ENCODE measurements at regions of chr20 and their contacts with region 1.

Region 1: GRCh38 chr20:32674362-32674789 is 635 bp upstream of the C20orf203 start:
- DNase-seq: no peak
- ATAC-seq: peak in 3 of 8 donors; percentile 34 to 48 (median 44)
- H3K4me3 ChIP-seq: no peak overlapping the region
- H3K27ac ChIP-seq: no peak overlapping the region
- H3K4me1 ChIP-seq: peaks cover 0 to 31% (median 0%) of the 10 kb centered on the region in 9 donors
- H3K27me3 ChIP-seq: no peaks in the 10 kb centered on the region
- CTCF ChIP-seq: peak; percentile 44 to 74 (median 66)

Region 2: GRCh38 chr20:32357869-32358631 is 316.3 kb before region 1 on chr20 and contains the start of gene ASXL1:
- intact Hi-C with region 1: no loop called
- DNase-seq: peak; percentile 98 to 99
- ATAC-seq: peak; percentile 96 to 98 (median 97)
- H3K4me3 ChIP-seq: peak within 1 kb of the TSS; percentile 70 to 94 (median 85)
- H3K27ac ChIP-seq: peak within 1 kb of the TSS; percentile 86 to 99 (median 96)
- H3K4me1 ChIP-seq: peaks cover 3 to 65% (median 41%) of the 10 kb centered on the region in 9 donors
- H3K27me3 ChIP-seq: no peaks in the 10 kb centered on the region
- CTCF ChIP-seq: peak in 1 of 9 donors; percentile 32
- total RNA-seq, gene ASXL1: 23.1 to 39.4 (median 29.4) TPM

Region 3: GRCh38 chr20:32762149-32762753 is 87.9 kb after region 1 on chr20 and contains the start of gene DNMT3B:
- intact Hi-C with region 1: loop called in 2 of 10 experiments (anchors 5 kb)
- DNase-seq: peak; percentile 82 to 85
- ATAC-seq: peak; percentile 83 to 94 (median 92)
- H3K4me3 ChIP-seq: peak within 1 kb of the TSS; percentile 56 to 99 (median 81)
- H3K27ac ChIP-seq: peak within 1 kb of the TSS in 6 of 10 donors; percentile 23 to 69 (median 39)
- H3K4me1 ChIP-seq: peaks cover 5 to 26% (median 20%) of the 10 kb centered on the region in 9 donors
- H3K27me3 ChIP-seq: peaks cover 0 to 10% (median 0%) of the 10 kb centered on the region in 7 donors
- CTCF ChIP-seq: peak in 5 of 9 donors; percentile 20 to 54 (median 30)
- total RNA-seq, gene DNMT3B: 0.27 to 0.95 (median 0.68) TPM

Region 4: GRCh38 chr20:32779500-32780211 is 105.3 kb after region 1 on chr20:
- intact Hi-C with region 1: loop called (anchors 1 to 5 kb)
- DNase-seq: no peak
- ATAC-seq: no peak
- H3K4me3 ChIP-seq: no peak overlapping the region
- H3K27ac ChIP-seq: no peak overlapping the region
- H3K4me1 ChIP-seq: peaks cover 0 to 17% (median 4%) of the 10 kb centered on the region in 9 donors
- H3K27me3 ChIP-seq: no peaks in the 10 kb centered on the region
- CTCF ChIP-seq: no peak

Measured in heart right ventricle (tissue), 16 donors.